ENCODE measurements at regions of chr6 and their contacts with region 1.

Region 1: GRCh38 chr6:24205020-24205492 is 79.0 kb downstream of the NRSN1 start:
- ATAC-seq: peak; percentile 32 to 85 (median 78)
- H3K4me3 ChIP-seq: no peak overlapping the region
- H3K27ac ChIP-seq: no peak overlapping the region
- H3K4me1 ChIP-seq: peaks cover 2 to 14% of the 10 kb centered on the region in 2 donors

Region 2: GRCh38 chr6:23454080-23454976 is 750.7 kb before region 1 on chr6:
- in situ Hi-C with region 1: loop called in 1 of 9 experiments (anchors 25 kb)
- ATAC-seq: peak in 5 of 8 experiments; percentile 49 to 86 (median 50)
- H3K4me3 ChIP-seq: no peak overlapping the region
- H3K27ac ChIP-seq: peak overlapping the region in 1 of 2 donors; percentile 61
- H3K4me1 ChIP-seq: peaks cover 9 to 10% of the 10 kb centered on the region in 2 donors

Region 3: GRCh38 chr6:24991810-24992467 is 786.9 kb after region 1 on chr6:
- in situ Hi-C with region 1: no loop called
- ATAC-seq: peak in 7 of 8 experiments; percentile 41 to 93 (median 49)
- H3K4me3 ChIP-seq: no peak overlapping the region
- H3K27ac ChIP-seq: no peak overlapping the region
- H3K4me1 ChIP-seq: peaks cover 5% of the 10 kb centered on the region in 2 donors